ENCODE measurements at regions of chr12 and their contacts with region 1.

Region 1: GRCh38 chr12:106919910-106920544 is 35.7 kb upstream of the TMEM263 start:
- H3K4me3 ChIP-seq: no peak overlapping the region
- H3K27ac ChIP-seq: no peak overlapping the region
- H3K4me1 ChIP-seq: no peaks in the 10 kb centered on the region
- CTCF ChIP-seq: peak; percentile 44; the same call in 1 of the 2 replicates

Region 2: DNA sequence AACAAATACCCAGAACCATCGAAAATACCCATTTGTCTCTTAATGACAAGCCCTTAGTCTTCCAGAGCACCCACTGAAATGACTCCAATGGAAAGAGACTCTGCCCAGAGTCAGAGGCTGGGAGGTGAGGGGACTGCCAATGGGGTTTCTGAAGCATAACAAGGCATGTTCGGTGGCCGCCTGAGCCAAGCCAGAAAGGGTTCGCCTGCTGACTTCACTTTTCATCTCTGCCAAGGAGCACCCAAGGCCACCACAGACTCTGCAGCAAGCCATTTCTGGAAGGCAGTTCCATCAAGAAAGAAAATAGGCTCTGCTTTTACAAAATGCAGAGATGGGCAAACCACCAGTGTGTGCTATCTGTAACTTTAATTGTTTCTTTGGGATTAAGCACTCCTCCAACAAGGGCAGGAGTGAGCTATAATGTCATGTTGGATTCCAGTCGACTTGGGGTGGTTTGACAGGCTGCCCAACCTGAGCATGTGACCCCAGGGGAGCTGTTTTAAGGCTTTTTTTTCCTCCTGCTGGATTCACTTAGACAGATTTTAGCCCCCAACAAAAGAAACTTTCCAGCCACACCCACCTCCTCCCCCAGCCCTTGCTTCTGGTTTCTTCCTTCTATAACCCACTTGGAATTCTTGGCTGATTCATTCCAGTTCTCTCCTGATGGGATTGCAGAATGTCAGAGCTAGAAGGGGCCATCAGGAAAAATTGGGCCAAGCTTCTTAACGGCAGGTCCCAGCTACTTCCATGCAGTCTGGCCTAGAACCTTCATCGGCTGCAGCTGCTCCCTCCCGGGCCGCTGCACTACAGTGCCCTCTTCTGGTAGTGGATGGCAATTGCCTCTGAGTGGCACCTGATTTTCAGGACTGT is 696.3 kb before region 1 on chr12:
- CTCF ChIA-PET with region 1: interaction called, 10 read pairs
- POLR2A ChIA-PET with region 1: no interaction called
- H3K4me3 ChIP-seq: no peak overlapping the region
- H3K27ac ChIP-seq: no peak overlapping the region
- H3K4me1 ChIP-seq: no peaks in the 10 kb centered on the region
- CTCF ChIP-seq: peak; percentile 82

Region 3: GRCh38 chr12:106386813-106387535 is 533.1 kb before region 1 on chr12:
- CTCF ChIA-PET with region 1: interaction called, 16 read pairs
- POLR2A ChIA-PET with region 1: no interaction called
- H3K4me3 ChIP-seq: no peak overlapping the region
- H3K27ac ChIP-seq: no peak overlapping the region
- H3K4me1 ChIP-seq: no peaks in the 10 kb centered on the region
- CTCF ChIP-seq: no peak

Region 4: GRCh38 chr12:106841510-106842302 is 78.3 kb before region 1 on chr12:
- CTCF ChIA-PET with region 1: interaction called, 17 read pairs
- POLR2A ChIA-PET with region 1: no interaction called
- H3K4me3 ChIP-seq: no peak overlapping the region
- H3K27ac ChIP-seq: no peak overlapping the region
- H3K4me1 ChIP-seq: peaks cover 5% of the 10 kb centered on the region; the same call in 1 of the 2 replicates
- CTCF ChIP-seq: no peak

Region 5: DNA sequence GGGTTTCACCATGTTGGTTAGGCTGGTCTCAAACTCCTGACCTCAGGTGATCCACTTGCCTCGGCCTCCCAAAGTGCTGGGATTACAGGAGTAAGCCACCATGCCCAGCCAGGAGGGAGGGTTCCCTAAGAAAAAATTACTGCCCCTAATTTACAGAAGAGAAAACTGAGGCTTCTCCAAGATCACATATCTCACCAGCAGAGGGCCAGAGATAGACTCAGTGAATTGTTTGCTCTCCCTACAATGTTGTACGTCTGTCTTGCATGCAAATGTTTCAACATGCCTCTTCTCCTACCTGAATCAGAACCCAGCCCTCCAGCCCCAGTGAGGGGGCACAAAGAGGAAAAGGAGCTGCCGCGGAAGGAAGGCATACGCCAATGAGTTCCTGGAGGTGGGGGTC is 12.6 kb before region 1 on chr12:
- CTCF ChIA-PET with region 1: interaction called, 10 read pairs
- POLR2A ChIA-PET with region 1: no interaction called
- H3K4me3 ChIP-seq: no peak overlapping the region
- H3K27ac ChIP-seq: no peak overlapping the region
- H3K4me1 ChIP-seq: no peaks in the 10 kb centered on the region
- CTCF ChIP-seq: no peak

Measured in HEK293 (cell line).